ENCODE measurements at regions of chr1 and their contacts with region 1.

Region 1: GRCh38 chr1:154607609-154608396 is at the start of gene ADAR:
- DNase-seq: peak; percentile 93
- H3K4me3 Mint-ChIP-seq: peak within 1 kb of the TSS; percentile 94
- H3K27ac Mint-ChIP-seq: peak within 1 kb of the TSS; percentile 98
- H3K4me1 Mint-ChIP-seq: peaks cover 68% of the 10 kb centered on the region
- H3K27me3 Mint-ChIP-seq: no peaks in the 10 kb centered on the region
- total RNA-seq, gene ADAR: 299 and 301 TPM in 2 replicates

Region 2: GRCh38 chr1:154519591-154519991 is 88.2 kb before region 1 on chr1:
- intact Hi-C with region 1: no loop called
- DNase-seq: no peak
- H3K4me3 Mint-ChIP-seq: no peak overlapping the region
- H3K27ac Mint-ChIP-seq: no peak overlapping the region
- H3K4me1 Mint-ChIP-seq: no peaks in the 10 kb centered on the region
- H3K27me3 Mint-ChIP-seq: peaks cover 42% of the 10 kb centered on the region

Region 3: DNA sequence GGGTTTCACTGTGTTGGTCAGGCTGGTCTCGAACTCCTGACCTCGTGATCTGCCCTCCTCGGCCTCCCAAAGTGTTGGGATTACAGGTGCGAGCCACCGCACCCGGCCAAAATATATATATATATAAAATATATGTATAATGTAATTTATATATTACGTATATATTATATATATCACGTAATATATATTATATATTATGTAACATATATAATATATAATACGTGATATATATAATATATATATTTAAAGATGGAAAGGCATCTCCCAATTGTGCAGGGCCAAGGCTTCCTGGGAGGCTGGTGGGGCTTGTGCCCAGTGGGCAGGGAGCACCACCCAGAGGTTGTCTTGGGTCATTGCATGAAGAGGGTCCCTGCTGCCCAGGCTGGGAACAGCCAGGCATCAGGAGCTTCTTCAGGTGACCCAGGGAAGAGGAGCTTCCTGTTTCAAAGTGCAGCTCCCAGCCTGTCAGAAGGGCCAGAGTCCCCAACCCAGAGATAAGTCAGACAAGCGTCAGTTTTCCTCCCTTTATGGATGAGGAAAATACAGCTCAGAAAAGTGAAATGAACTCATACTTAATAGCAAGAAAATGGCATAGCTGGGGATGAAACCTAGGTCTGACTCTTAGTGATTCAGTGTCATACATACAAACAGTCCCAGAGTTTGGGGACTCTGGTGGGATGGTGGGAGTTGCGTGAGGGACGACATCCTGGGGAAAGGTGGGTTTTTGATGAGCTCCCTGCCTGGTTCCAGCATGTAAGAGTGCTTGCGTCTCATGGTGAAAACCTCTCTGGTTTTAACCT is 61.3 kb before region 1 on chr1:
- intact Hi-C with region 1: no loop called
- DNase-seq: peak; percentile 19
- H3K4me3 Mint-ChIP-seq: no peak overlapping the region
- H3K27ac Mint-ChIP-seq: no peak overlapping the region
- H3K4me1 Mint-ChIP-seq: peaks cover 6% of the 10 kb centered on the region
- H3K27me3 Mint-ChIP-seq: peaks cover 6% of the 10 kb centered on the region

Region 4: GRCh38 chr1:154627257-154628120 is 19.7 kb after region 1 on chr1:
- intact Hi-C with region 1: loop called (anchors 1 kb)
- DNase-seq: peak; percentile 83
- H3K4me3 Mint-ChIP-seq: peak overlapping the region; percentile 99
- H3K27ac Mint-ChIP-seq: peak overlapping the region; percentile 98
- H3K4me1 Mint-ChIP-seq: peaks cover 51% of the 10 kb centered on the region
- H3K27me3 Mint-ChIP-seq: peaks cover 12% of the 10 kb centered on the region

Region 5: GRCh38 chr1:154760469-154760933 is 152.7 kb after region 1 on chr1:
- intact Hi-C with region 1: loop called (anchors 1 kb)
- DNase-seq: peak; percentile 76
- H3K4me3 Mint-ChIP-seq: peak overlapping the region; percentile 70
- H3K27ac Mint-ChIP-seq: peak overlapping the region; percentile 88
- H3K4me1 Mint-ChIP-seq: peaks cover 53% of the 10 kb centered on the region
- H3K27me3 Mint-ChIP-seq: peaks cover 14% of the 10 kb centered on the region

Region 6: GRCh38 chr1:154955718-154956543 is 348.1 kb after region 1 on chr1 and contains the start of gene PBXIP1:
- intact Hi-C with region 1: loop called (anchors 5 kb)
- DNase-seq: peak; percentile 86
- H3K4me3 Mint-ChIP-seq: peak within 1 kb of the TSS; percentile 94
- H3K27ac Mint-ChIP-seq: peak within 1 kb of the TSS; percentile 100
- H3K4me1 Mint-ChIP-seq: peaks cover 65% of the 10 kb centered on the region
- H3K27me3 Mint-ChIP-seq: peaks cover 2% of the 10 kb centered on the region
- total RNA-seq, gene PBXIP1: 25.1 and 27.9 TPM in 2 replicates

Region 7: DNA sequence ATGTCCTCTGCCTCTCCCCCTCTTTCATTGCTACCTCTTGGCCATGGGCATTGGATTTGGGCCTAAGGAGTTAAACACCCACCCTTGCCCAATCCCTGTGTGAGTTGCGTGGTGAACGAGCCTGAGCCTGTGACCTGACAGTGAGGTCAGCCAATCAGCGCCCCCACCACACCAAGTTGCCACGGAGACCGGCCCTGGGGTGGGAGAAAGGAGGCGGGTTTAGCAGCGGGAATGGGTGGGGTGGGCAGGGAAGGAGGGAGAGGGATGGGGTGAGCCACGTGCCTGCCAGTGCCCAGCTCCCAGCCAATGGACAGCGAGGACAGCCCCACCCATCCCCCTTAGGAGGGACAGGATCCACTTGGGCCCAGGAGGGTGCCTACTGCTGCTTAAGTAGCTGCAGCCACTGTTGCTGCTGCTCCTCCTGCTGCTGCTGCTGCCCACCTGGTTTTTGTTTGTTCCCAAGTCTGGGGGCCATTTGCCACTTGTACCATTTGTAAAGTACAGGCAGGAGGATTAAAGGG is 404.3 kb after region 1 on chr1:
- intact Hi-C with region 1: loop called (anchors 2 kb)
- DNase-seq: no peak
- H3K4me3 Mint-ChIP-seq: peak overlapping the region; percentile 85
- H3K27ac Mint-ChIP-seq: peak overlapping the region; percentile 90
- H3K4me1 Mint-ChIP-seq: peaks cover 55% of the 10 kb centered on the region
- H3K27me3 Mint-ChIP-seq: no peaks in the 10 kb centered on the region

Region 8: DNA sequence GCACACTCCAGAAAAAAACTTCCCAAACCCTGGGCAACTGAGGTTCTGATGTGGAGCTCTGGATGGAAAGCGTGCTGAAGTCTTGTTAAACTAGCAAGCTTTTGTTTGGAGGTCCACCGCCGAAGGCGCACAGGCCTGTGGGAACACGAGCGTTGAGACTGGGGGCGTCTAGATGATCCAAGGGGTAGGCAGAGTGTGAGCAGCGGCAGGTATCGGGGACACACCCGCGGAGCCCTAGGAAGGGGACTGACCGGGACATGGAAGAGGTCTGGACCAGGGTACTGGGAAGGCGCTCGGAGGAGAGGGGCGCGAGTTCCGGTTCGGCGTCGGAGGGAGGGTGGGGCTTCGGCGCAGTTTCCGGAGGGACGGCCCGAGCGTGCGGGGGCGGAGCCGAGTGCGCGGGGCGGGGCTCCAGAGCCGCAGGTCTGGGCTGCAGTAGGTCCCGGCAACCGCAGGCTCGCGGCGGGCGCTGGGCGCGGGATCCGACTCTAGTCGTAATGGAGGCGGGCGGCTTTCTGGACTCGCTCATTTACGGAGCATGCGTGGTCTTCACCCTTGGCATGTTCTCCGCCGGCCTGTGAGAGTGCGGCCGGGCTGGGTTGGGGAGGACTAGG is 527.7 kb after region 1 on chr1 and contains the start of gene SLC50A1:
- intact Hi-C with region 1: loop called (anchors 2 kb)
- DNase-seq: peak; percentile 91
- H3K4me3 Mint-ChIP-seq: peak within 1 kb of the TSS; percentile 94
- H3K27ac Mint-ChIP-seq: peak within 1 kb of the TSS; percentile 99
- H3K4me1 Mint-ChIP-seq: peaks cover 42% of the 10 kb centered on the region
- H3K27me3 Mint-ChIP-seq: peaks cover 5% of the 10 kb centered on the region
- total RNA-seq, gene SLC50A1: 45.7 and 47.7 TPM in 2 replicates